ENCODE measurements at regions of chr5 and their contacts with region 1.

Region 1: DNA sequence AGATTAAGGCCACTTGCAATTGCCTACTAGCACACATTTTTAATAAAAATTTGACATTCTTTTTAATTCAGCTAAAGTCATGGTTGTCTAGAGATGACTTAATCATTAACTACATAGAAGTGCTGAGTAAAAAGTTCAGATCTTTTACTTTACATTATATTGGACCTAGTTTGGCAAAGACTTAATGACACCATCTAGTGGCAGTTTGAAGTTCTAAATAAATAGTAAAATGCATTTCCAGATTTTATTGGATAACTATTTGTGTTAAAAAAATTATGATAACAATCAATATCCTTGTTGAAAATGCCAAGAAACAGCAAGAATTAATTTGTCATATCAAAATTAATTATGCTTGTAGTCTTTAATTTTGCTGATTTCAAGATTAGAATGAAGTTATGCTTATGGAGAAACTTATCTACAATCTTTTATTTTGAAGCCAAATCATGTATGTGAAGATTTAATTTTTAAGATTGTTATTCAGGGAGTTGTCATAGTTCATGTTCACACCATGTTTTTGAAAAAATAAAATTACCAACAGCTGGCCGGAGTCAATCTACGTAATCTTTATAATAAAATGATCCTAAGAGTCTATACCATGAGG is 69.6 kb upstream of the PJA2 start:
- DNase-seq: no peak
- H3K4me3 ChIP-seq: no peak overlapping the region
- H3K27ac ChIP-seq: no peak overlapping the region
- H3K4me1 ChIP-seq: no peaks in the 10 kb centered on the region
- H3K27me3 ChIP-seq: no peaks in the 10 kb centered on the region
- CTCF ChIP-seq: peak in 2 of 3 experiments; percentile 13 to 26

Region 2: GRCh38 chr5:108681079-108681921 is 798.1 kb before region 1 on chr5:
- intact Hi-C with region 1: loop called (anchors 10 kb)
- DNase-seq: no peak
- H3K4me3 ChIP-seq: peak overlapping the region in 1 of 2 donors; percentile 27
- H3K27ac ChIP-seq: peak overlapping the region; percentile 55 to 67
- H3K4me1 ChIP-seq: no peaks in the 10 kb centered on the region
- H3K27me3 ChIP-seq: no peaks in the 10 kb centered on the region
- CTCF ChIP-seq: peak; percentile 72 to 86 (median 83)